ENCODE measurements at regions of chr11 and their contacts with region 1.

Region 1: GRCh38 chr11:112453601-112454577 is 193.2 kb upstream of the PLET1 start:
- DNase-seq: peak; percentile 10 to 85
- H3K4me3 ChIP-seq: no peak overlapping the region
- H3K27ac ChIP-seq: no peak overlapping the region
- H3K4me1 ChIP-seq: no peaks in the 10 kb centered on the region
- H3K27me3 ChIP-seq: no peaks in the 10 kb centered on the region; a peak in 1 of 7 replicates
- CTCF ChIP-seq: peak; percentile 66 to 81 (median 73)
- EP300 ChIP-seq: no peak
- POLR2A ChIP-seq: no peak
- RAD21 ChIP-seq: peak; percentile 47 to 59

Region 2: DNA sequence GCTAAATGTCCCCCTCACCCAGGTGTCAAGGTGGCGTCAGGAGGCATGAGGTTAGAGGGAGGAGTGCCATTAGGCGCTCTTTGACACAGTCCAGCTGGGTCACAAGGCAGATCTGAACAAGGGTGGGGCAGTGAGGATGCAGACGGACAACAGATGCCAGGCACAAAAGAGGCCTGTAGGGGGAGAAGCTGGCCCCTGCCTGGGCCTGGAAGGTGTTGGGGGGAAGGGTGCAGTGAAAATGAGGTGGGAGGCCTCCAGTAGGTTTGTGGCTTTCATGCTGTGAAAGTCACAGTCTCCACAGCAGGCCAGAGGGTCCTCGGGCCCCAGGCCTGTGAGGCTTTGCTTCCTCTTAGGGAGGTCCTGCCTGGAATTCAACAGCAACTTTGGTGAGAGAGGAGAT is 108.2 kb before region 1 on chr11:
- CTCF ChIA-PET with region 1: interaction called, 12 read pairs
- POLR2A ChIA-PET with region 1: no interaction called
- DNase-seq: peak in 1 of 2 experiments; percentile 54
- H3K4me3 ChIP-seq: no peak overlapping the region
- H3K27ac ChIP-seq: no peak overlapping the region
- H3K4me1 ChIP-seq: peaks cover 0 to 8% (median 6%) of the 10 kb centered on the region in 4 experiments; a peak in 3 of 7 replicates
- H3K27me3 ChIP-seq: no peaks in the 10 kb centered on the region
- CTCF ChIP-seq: peak; percentile 53 to 70 (median 55)
- EP300 ChIP-seq: no peak
- POLR2A ChIP-seq: no peak
- RAD21 ChIP-seq: peak; percentile 52 to 64

Region 3: GRCh38 chr11:112470355-112470754 is 16.5 kb after region 1 on chr11:
- CTCF ChIA-PET with region 1: interaction called, 39 read pairs
- POLR2A ChIA-PET with region 1: no interaction called
- DNase-seq: no peak
- H3K4me3 ChIP-seq: no peak overlapping the region
- H3K27ac ChIP-seq: no peak overlapping the region
- H3K4me1 ChIP-seq: no peaks in the 10 kb centered on the region
- H3K27me3 ChIP-seq: no peaks in the 10 kb centered on the region
- CTCF ChIP-seq: no peak
- EP300 ChIP-seq: no peak
- POLR2A ChIP-seq: no peak
- RAD21 ChIP-seq: no peak

Region 4: DNA sequence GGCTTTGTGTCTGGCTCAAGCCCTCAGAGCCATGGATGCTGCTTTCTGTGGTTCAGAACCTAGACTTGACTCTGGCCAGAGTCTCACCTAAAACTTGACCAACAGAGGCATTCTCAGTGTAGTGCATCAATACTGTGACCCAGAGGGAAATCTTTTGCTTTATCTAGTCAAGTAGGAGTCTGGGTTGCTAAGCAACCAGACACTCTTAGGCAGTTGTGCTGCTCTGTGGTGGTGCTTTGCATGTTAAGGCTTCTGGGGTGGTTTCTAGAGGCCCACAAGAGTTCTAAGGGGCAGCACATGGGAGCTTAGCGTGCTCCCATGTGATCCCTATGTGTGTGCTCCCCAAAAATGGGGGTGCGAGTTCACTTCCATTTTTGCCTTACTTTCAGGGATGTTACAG is 31.4 kb after region 1 on chr11:
- CTCF ChIA-PET with region 1: interaction called, 31 read pairs
- POLR2A ChIA-PET with region 1: no interaction called
- DNase-seq: no peak
- H3K4me3 ChIP-seq: no peak overlapping the region
- H3K27ac ChIP-seq: no peak overlapping the region
- H3K4me1 ChIP-seq: no peaks in the 10 kb centered on the region
- H3K27me3 ChIP-seq: no peaks in the 10 kb centered on the region; a peak in 1 of 7 replicates
- CTCF ChIP-seq: no peak
- EP300 ChIP-seq: no peak
- POLR2A ChIP-seq: no peak
- RAD21 ChIP-seq: no peak

Region 5: GRCh38 chr11:112523477-112523876 is 69.6 kb after region 1 on chr11:
- CTCF ChIA-PET with region 1: interaction called, 15 read pairs
- POLR2A ChIA-PET with region 1: no interaction called
- DNase-seq: no peak
- H3K4me3 ChIP-seq: no peak overlapping the region
- H3K27ac ChIP-seq: no peak overlapping the region
- H3K4me1 ChIP-seq: 0 out of 7 replicates have a peak, but pooled peaks cover 0 to 3% (median 0%) of the 10 kb centered on the region in 4 experiments
- H3K27me3 ChIP-seq: 0 out of 7 replicates have a peak, but pooled peaks cover 0 to 2% (median 0%) of the 10 kb centered on the region in 4 experiments
- CTCF ChIP-seq: no peak
- EP300 ChIP-seq: no peak
- POLR2A ChIP-seq: no peak
- RAD21 ChIP-seq: no peak

Region 6: DNA sequence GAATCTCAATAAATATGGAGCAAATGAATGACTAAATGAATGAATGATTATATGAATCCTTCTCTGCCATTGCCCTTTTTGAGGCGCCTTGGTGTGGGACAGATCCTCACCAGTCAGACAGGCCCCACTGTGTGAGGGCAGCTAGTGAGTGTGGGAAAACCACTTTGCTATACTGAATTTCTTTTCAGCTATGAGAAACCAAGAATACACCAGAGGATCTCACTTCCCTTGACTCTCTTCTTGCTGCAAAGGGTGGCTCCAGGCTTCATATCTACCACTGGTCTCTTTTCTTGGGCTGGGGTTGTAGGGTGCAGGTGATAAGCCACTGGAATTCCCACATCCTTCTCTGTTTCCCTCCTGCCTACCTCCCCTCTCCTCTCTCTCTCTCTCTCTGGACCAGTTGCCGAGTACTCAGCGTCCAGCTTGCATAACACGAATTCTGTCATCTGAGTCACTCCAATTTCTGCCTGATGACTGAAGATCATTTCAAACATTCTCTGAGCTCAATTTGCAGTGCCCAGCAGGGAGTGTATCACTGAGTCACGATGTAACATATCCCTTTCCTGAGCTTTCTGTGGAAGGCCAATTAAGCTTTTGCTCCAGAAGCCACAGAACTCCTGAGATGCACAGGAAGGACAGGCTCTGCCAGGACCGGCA is 203.0 kb after region 1 on chr11:
- CTCF ChIA-PET with region 1: no interaction called
- POLR2A ChIA-PET with region 1: no interaction called
- DNase-seq: no peak
- H3K4me3 ChIP-seq: no peak overlapping the region
- H3K27ac ChIP-seq: no peak overlapping the region
- H3K4me1 ChIP-seq: no peaks in the 10 kb centered on the region
- H3K27me3 ChIP-seq: no peaks in the 10 kb centered on the region
- CTCF ChIP-seq: no peak
- EP300 ChIP-seq: no peak
- POLR2A ChIP-seq: no peak
- RAD21 ChIP-seq: no peak